ENCODE measurements at regions of chr6 and their contacts with region 1.

Region 1: DNA sequence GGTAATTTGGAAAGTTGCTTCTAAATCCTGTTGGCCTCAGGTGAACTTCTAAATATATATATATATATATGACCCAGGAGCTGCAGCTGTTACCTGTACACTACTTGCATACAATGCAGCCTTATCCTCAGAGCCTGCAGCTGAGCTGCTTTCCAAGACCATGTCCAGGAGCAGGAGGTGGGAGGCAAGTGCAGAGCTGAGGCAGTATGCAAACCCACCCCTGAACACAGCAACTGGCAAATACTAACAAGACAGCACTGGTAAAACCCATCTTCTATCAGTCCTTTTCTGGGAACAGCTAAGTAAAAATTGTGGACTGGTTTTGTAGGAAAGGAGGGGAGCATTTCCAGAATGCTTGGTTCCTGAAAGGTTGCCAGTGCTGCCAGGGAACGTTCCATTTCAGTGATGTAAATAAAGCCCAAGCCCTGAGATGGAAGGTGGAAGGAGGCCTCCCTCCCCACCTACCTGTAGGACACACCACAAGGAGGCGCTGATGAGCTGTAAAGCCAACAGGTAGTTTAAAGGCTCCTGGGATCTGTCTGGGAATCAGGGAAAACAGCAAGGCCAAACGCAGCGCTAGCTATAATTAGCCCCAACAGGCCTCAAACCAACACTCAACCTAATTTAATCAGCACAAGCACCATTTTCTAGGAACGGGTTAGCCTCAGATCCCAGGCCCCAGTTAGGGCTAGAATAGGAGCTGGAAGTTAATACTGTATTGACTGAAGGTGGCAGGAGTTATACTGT is 93.8 kb upstream of the MAP7 start:
- DNase-seq: peak; percentile 73
- H3K4me3 ChIP-seq: no peak overlapping the region; a peak in 1 of 4 replicates
- H3K27ac ChIP-seq: peak overlapping the region; percentile 19 to 53; a peak in 2 of 4 replicates
- H3K4me1 ChIP-seq: peaks cover 4 to 9% of the 10 kb centered on the region in 2 experiments; a peak in 2 of 4 replicates
- H3K27me3 ChIP-seq: no peaks in the 10 kb centered on the region
- CTCF ChIP-seq: peak; percentile 83
- EP300 ChIP-seq: no peak
- RAD21 ChIP-seq: peak; percentile 92

Region 2: DNA sequence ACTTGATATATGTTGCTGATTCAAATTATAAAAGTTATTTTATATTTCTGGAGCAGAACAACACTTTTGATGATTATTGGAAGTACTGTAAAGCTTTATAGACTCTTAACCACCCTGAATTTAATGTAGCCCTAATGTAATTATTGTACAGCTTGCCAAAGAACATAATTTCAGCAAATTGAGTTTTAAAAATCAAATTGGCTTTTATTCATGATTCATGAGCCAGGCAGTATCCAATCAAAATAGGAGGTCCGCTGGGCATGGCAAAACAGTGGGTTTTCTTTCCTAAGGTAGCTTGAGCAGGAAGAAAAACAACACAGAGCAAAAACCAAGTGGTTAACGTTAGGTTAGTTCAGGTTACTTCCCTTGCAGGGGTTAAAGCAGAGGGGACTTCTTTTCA is 29.0 kb before region 1 on chr6:
- CTCF ChIA-PET with region 1: interaction called, 13 read pairs
- POLR2A ChIA-PET with region 1: no interaction called
- DNase-seq: peak; percentile 37
- H3K4me3 ChIP-seq: no peak overlapping the region; a peak in 1 of 4 replicates
- H3K27ac ChIP-seq: peak overlapping the region; percentile 79 to 89; a peak in 3 of 4 replicates
- H3K4me1 ChIP-seq: peaks cover 5 to 32% of the 10 kb centered on the region in 2 experiments; a peak in 3 of 4 replicates
- H3K27me3 ChIP-seq: no peaks in the 10 kb centered on the region
- CTCF ChIP-seq: no peak
- EP300 ChIP-seq: 0 out of 4 replicates have a peak, but pooled peaks of 1 of the 2 experiments have one; percentile 10
- RAD21 ChIP-seq: no peak

Region 3: GRCh38 chr6:136657666-136658065 is 13.6 kb after region 1 on chr6:
- CTCF ChIA-PET with region 1: interaction called, 20 read pairs
- POLR2A ChIA-PET with region 1: no interaction called
- DNase-seq: no peak
- H3K4me3 ChIP-seq: no peak overlapping the region
- H3K27ac ChIP-seq: no peak overlapping the region
- H3K4me1 ChIP-seq: no peaks in the 10 kb centered on the region
- H3K27me3 ChIP-seq: no peaks in the 10 kb centered on the region
- CTCF ChIP-seq: no peak
- EP300 ChIP-seq: no peak
- RAD21 ChIP-seq: no peak

Region 4: GRCh38 chr6:136728976-136729515 is 85.0 kb after region 1 on chr6:
- CTCF ChIA-PET with region 1: interaction called, 12 read pairs
- POLR2A ChIA-PET with region 1: no interaction called
- DNase-seq: no peak
- H3K4me3 ChIP-seq: no peak overlapping the region
- H3K27ac ChIP-seq: no peak overlapping the region
- H3K4me1 ChIP-seq: peaks cover 0 to 4% of the 10 kb centered on the region in 2 experiments; a peak in 2 of 4 replicates
- H3K27me3 ChIP-seq: no peaks in the 10 kb centered on the region
- CTCF ChIP-seq: no peak
- EP300 ChIP-seq: no peak
- RAD21 ChIP-seq: no peak

Region 5: DNA sequence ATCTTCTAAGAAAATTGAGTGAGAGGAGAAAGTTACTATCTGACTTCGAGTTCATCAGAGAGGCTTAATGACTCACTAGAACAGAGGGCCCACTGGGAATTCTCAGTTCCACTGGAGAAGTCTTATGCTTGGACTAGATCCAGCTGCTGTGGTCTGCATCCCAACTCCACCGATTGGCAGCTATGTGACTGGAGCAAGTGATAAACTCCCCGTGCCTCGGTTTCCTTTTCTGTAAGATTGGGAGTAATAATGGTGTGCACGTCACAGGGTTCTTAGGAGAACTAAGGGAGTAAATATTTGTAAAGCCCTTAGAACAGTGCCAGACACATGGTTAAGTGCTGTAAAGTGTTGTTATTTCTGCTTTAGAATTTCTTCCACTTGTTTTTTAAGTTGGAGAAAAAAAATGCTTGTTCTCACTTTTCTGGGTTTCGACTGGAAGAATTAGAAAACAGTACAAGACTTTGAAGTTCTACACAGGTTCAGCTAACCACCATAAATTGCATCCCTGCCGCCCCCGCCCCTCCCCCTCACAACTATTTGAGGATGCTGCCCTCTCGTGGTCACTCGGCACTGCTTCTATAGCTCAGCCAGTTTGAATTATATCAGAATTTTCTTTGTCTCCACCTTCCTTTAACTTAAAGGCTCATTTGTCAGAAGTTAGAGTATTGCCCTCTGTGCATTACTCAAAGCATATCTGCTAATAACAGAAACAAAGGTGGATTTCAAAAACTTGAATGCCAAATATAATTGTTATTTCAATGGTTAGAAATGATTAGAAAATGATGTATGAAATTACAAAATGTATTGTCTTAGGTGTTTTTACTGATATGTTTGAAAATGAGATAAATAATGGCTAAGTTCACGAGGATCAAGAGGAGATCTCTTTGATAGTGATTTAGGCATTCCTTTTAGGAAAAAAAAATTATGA is 670.2 kb after region 1 on chr6:
- CTCF ChIA-PET with region 1: interaction called, 12 read pairs
- POLR2A ChIA-PET with region 1: no interaction called
- DNase-seq: peak; percentile 64
- H3K4me3 ChIP-seq: peak overlapping the region in 1 of 2 experiments; percentile 20; a peak in 1 of 4 replicates
- H3K27ac ChIP-seq: no peak overlapping the region
- H3K4me1 ChIP-seq: peaks cover 0 to 5% of the 10 kb centered on the region in 2 experiments; a peak in 2 of 4 replicates
- H3K27me3 ChIP-seq: no peaks in the 10 kb centered on the region
- CTCF ChIP-seq: peak; percentile 88
- EP300 ChIP-seq: no peak
- RAD21 ChIP-seq: peak; percentile 82

Measured in SK-N-SH (cell line).